H1 (cell line): ENCODE measurements at regions of chr12 and their contacts with region 1.

Region 1: GRCh38 chr12:25958428-25959070 is at the start of gene RASSF8:
- DNase-seq: peak in 1 of 2 experiments; percentile 79
- H3K4me3 ChIP-seq: peak within 1 kb of the TSS; percentile 84 to 98 (median 92)
- H3K27ac ChIP-seq: no peak within 1 kb of the TSS; the same call in 1 of the 2 replicates
- H3K4me1 ChIP-seq: peaks cover 0 to 4% (median 2%) of the 10 kb centered on the region in 4 experiments; a peak in 4 of 7 replicates
- H3K27me3 ChIP-seq: no peaks in the 10 kb centered on the region
- CTCF ChIP-seq: no peak
- EP300 ChIP-seq: no peak
- POLR2A ChIP-seq: peak; percentile 18 to 54; a peak in 2 of 3 replicates
- RAD21 ChIP-seq: no peak
- total RNA-seq, gene RASSF8: 46.7 and 48.2 TPM in 2 replicates

Region 2: GRCh38 chr12:25985296-25986175 is 27.0 kb after region 1 on chr12:
- CTCF ChIA-PET with region 1: interaction called, 9 read pairs
- POLR2A ChIA-PET with region 1: interaction called, 10 read pairs
- DNase-seq: no peak
- H3K4me3 ChIP-seq: no peak overlapping the region
- H3K27ac ChIP-seq: no peak overlapping the region
- H3K4me1 ChIP-seq: peaks cover 0 to 16% (median 8%) of the 10 kb centered on the region in 4 experiments; a peak in 3 of 7 replicates
- H3K27me3 ChIP-seq: no peaks in the 10 kb centered on the region
- CTCF ChIP-seq: no peak
- EP300 ChIP-seq: no peak
- POLR2A ChIP-seq: no peak
- RAD21 ChIP-seq: no peak